ENCODE measurements at regions of chr6 and their contacts with region 1.

Region 1: GRCh38 chr6:4018172-4018905 is 60.6 kb downstream of the FAM217A start:
- DNase-seq: peak; percentile 94 to 96 (median 95)
- H3K4me3 ChIP-seq: peak overlapping the region; percentile 57 to 64
- H3K4me3 Mint-ChIP-seq: peak overlapping the region; percentile 89 to 99 (median 96)
- H3K27ac ChIP-seq: peak overlapping the region; percentile 91
- H3K27ac Mint-ChIP-seq: peak overlapping the region; percentile 90 to 98 (median 96)
- H3K4me1 ChIP-seq: peaks cover 71% of the 10 kb centered on the region
- H3K4me1 Mint-ChIP-seq: peaks cover 49 to 88% (median 66%) of the 10 kb centered on the region in 4 donors
- H3K27me3 ChIP-seq: no peaks in the 10 kb centered on the region
- H3K27me3 Mint-ChIP-seq: no peaks in the 10 kb centered on the region

Region 2: GRCh38 chr6:2765166-2765895 is 1253.0 kb before region 1 on chr6 and contains the start of gene WRNIP1:
- CTCF ChIA-PET with region 1: no interaction called
- POLR2A ChIA-PET with region 1: interaction called, 4 read pairs
- intact Hi-C with region 1: loop called (anchors 1 kb)
- DNase-seq: peak; percentile 95 to 98 (median 98)
- H3K4me3 ChIP-seq: peak within 1 kb of the TSS; percentile 63 to 79
- H3K4me3 Mint-ChIP-seq: peak within 1 kb of the TSS; percentile 93 to 97 (median 95)
- H3K27ac ChIP-seq: peak within 1 kb of the TSS; percentile 90
- H3K27ac Mint-ChIP-seq: peak within 1 kb of the TSS; percentile 98 to 100 (median 99)
- H3K4me1 ChIP-seq: peaks cover 45% of the 10 kb centered on the region
- H3K4me1 Mint-ChIP-seq: peaks cover 33 to 63% (median 43%) of the 10 kb centered on the region in 4 donors
- H3K27me3 ChIP-seq: no peaks in the 10 kb centered on the region
- H3K27me3 Mint-ChIP-seq: peaks cover 0 to 1% of the 10 kb centered on the region in 2 donors
- total RNA-seq, gene WRNIP1: 41.1 to 42.7 TPM

Region 3: DNA sequence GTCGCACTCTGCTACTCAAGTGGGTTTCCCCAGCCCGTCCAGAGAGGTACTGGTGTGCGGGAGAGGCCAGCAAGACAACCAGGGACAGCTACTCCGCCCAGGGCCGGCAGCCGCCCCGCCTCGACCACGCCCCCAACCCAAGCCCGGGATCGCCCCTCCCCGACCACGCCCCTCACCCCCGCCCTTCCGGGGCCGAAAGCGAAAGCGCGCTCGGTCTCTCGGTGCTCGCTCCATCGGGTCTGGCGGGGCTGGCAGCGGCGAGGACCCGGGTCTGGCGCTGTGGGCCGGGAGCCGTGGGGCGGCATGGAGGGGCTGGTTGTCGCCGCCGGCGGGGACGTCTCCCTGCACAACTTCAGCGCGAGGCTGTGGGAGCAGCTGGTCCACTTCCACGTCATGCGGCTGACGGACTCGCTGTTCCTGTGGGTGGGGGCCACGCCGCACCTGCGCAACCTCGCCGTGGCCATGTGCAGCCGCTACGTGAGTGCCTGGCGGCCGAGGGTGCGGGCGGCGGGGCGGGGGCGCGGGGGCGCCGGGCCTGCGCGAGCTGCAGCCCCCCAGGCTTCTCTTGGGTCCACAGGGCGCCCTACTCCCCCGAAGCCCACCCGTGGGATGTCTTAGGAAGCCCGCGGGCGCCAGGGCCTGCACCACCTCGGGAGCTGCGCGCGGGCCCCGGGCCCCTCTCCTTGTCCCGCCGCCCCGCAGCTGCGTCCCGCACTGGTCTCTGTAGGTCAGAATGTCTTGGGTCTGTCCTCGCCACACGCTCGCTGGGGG is 759.4 kb before region 1 on chr6 and contains the start of gene PSMG4:
- CTCF ChIA-PET with region 1: no interaction called
- POLR2A ChIA-PET with region 1: interaction called, 8 read pairs
- intact Hi-C with region 1: loop called (anchors 2 kb)
- DNase-seq: peak; percentile 87 to 92 (median 88)
- H3K4me3 ChIP-seq: peak within 1 kb of the TSS; percentile 44 to 67
- H3K4me3 Mint-ChIP-seq: peak within 1 kb of the TSS; percentile 93 to 99 (median 96)
- H3K27ac ChIP-seq: peak within 1 kb of the TSS; percentile 70
- H3K27ac Mint-ChIP-seq: peak within 1 kb of the TSS; percentile 92 to 99 (median 95)
- H3K4me1 ChIP-seq: peaks cover 45% of the 10 kb centered on the region
- H3K4me1 Mint-ChIP-seq: peaks cover 21 to 49% (median 37%) of the 10 kb centered on the region in 4 donors
- H3K27me3 ChIP-seq: no peaks in the 10 kb centered on the region
- H3K27me3 Mint-ChIP-seq: no peaks in the 10 kb centered on the region
- total RNA-seq, gene PSMG4: 41.0 to 41.6 TPM

Region 4: DNA sequence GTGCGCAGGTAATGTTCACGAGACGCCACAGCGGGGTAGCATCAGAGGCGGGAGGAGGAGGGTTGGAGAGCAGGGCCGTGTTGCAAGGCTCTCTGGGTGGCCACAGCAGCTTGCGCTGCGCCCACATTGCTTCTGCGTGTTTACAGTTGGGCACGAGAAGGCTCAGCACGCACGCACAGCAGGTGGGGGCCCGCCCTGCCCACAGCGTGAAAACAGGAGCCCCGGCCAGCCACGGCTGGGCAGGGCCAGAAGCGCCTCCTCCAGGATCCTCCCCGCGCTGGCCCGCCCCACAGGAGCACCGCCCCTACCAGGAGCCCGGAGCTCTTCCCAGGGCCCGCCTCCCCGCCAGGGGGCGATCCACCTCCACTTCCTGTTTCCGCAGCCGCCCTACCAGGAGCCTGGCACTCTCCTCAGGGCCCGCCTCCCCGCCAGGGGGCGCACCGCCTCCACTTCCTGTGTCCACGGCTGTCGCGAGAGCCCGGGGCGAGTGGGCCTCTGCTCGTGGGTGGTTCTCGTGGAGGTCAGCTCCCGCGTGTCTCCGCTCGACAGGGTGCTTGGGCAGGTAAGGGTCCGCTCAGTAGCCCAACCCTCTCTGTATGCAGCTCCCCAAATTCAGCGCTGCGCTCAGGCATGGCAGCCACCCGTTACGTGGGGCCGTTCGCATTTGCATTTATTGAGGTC is 169.3 kb before region 1 on chr6 and contains the start of gene FAM50B:
- CTCF ChIA-PET with region 1: interaction called, 24 read pairs
- POLR2A ChIA-PET with region 1: interaction called, 34 read pairs
- intact Hi-C with region 1: loop called (anchors 1 kb)
- DNase-seq: peak; percentile 90 to 92 (median 91)
- H3K4me3 ChIP-seq: peak within 1 kb of the TSS in 1 of 2 donors; percentile 63
- H3K4me3 Mint-ChIP-seq: peak within 1 kb of the TSS; percentile 79 to 87 (median 85)
- H3K27ac ChIP-seq: peak within 1 kb of the TSS; percentile 45
- H3K27ac Mint-ChIP-seq: peak within 1 kb of the TSS; percentile 66 to 96 (median 92)
- H3K4me1 ChIP-seq: peaks cover 34% of the 10 kb centered on the region
- H3K4me1 Mint-ChIP-seq: peaks cover 21 to 46% (median 29%) of the 10 kb centered on the region in 4 donors
- H3K27me3 ChIP-seq: no peaks in the 10 kb centered on the region
- H3K27me3 Mint-ChIP-seq: no peaks in the 10 kb centered on the region
- total RNA-seq, gene FAM50B: 15.0 to 15.4 TPM

Region 5: DNA sequence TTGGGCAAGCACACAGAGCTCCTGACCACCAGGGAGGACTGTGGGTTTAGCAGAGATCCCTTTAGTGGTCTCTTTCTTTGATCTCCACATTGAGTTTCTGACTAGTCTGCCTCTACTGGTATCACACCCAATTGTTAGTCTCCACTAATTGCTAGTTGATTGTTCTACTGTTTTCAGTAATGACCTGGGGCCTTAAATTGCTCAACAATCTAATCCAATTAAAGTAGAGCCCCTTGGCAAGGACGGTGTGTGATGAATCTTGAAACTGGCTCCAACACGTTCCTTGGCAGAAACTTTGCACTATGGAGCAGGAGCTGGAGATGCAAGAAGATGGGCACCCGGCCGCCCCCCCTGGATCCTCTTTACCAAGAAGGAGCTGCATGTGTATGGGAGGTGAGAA is 156.9 kb before region 1 on chr6:
- CTCF ChIA-PET with region 1: no interaction called
- POLR2A ChIA-PET with region 1: no interaction called
- intact Hi-C with region 1: no loop called
- DNase-seq: no peak
- H3K4me3 ChIP-seq: no peak overlapping the region
- H3K4me3 Mint-ChIP-seq: no peak overlapping the region
- H3K27ac ChIP-seq: no peak overlapping the region
- H3K27ac Mint-ChIP-seq: no peak overlapping the region
- H3K4me1 ChIP-seq: no peaks in the 10 kb centered on the region
- H3K4me1 Mint-ChIP-seq: peaks cover 0 to under 1% (median 0%) of the 10 kb centered on the region in 4 donors
- H3K27me3 ChIP-seq: no peaks in the 10 kb centered on the region
- H3K27me3 Mint-ChIP-seq: peaks cover 0 to 4% of the 10 kb centered on the region in 2 donors

Region 6: DNA sequence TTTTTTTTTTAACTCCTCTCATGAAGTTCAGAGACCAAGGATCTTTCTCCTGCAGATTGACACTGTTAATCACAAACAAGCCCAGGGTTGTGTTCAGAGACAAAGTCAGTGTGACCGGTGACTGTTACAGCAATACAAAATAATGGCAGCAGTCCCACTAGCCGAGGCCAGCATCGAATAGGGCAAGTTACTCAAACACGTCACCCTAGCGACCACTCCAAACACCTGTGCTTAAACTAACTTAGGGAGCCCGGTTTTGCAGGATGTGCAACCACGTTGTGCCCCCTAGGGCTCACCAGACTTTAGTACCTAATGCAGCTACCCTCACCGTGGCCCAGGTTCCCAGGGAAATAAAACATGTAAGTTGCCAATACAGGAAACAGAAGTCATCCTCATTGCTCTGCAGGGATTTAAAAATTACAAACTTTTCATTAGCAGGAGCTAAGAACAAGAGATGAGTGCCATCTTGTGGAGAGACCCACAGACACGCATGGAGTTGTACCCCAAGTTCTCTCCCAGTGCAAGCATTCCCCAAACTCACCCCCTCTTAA is 131.1 kb before region 1 on chr6:
- CTCF ChIA-PET with region 1: no interaction called
- POLR2A ChIA-PET with region 1: no interaction called
- intact Hi-C with region 1: no loop called
- DNase-seq: peak in 2 of 5 donors; percentile 4 to 18
- H3K4me3 ChIP-seq: no peak overlapping the region
- H3K4me3 Mint-ChIP-seq: no peak overlapping the region
- H3K27ac ChIP-seq: no peak overlapping the region
- H3K27ac Mint-ChIP-seq: no peak overlapping the region
- H3K4me1 ChIP-seq: no peaks in the 10 kb centered on the region
- H3K4me1 Mint-ChIP-seq: peaks cover 0 to 3% (median 0%) of the 10 kb centered on the region in 4 donors
- H3K27me3 ChIP-seq: no peaks in the 10 kb centered on the region
- H3K27me3 Mint-ChIP-seq: no peaks in the 10 kb centered on the region

Region 7: DNA sequence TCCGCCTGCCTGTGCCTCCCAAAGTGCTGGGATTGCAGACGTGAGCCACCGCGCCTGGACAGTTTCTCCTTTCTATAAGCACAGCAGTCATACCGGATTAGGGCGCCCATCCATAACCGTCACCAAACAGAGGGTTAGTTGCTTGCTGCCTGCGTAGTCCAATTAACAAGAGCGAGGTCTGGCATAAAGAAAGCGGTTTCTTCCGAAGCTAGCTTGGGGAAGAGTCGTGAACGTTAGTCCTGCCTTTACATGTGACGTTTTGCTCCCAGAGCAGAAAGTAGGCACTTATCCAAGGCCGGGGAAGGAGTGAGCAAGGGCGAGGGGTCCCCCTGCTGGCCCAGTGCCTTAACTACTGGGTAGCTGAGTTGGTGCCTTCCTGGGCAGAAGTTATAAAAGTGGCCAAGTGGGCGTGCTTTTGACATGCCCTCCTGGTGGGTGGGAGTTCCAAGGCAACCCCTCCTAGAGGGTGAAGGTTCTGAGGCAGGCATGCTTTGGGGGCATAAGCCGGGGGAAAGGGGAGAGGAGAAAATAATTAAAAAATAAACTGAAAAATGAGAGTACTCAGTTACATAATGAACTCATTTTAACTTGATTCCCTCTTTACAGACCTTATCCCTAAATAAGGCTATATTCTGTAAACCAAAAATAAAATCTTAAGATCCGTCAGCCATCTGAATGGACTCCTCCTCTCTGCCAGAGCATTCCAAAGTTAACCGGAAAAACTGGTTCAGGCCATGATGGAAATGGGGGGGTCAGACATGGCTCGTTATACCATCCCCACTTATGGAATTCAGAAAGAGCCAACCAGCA is 27.4 kb before region 1 on chr6:
- CTCF ChIA-PET with region 1: interaction called, 16 read pairs
- POLR2A ChIA-PET with region 1: interaction called, 9 read pairs
- intact Hi-C with region 1: no loop called
- DNase-seq: peak; percentile 52 to 68 (median 58)
- H3K4me3 ChIP-seq: no peak overlapping the region
- H3K4me3 Mint-ChIP-seq: no peak overlapping the region
- H3K27ac ChIP-seq: no peak overlapping the region
- H3K27ac Mint-ChIP-seq: peak overlapping the region in 4 of 7 donors; percentile 33 to 91 (median 56)
- H3K4me1 ChIP-seq: peaks cover 8% of the 10 kb centered on the region
- H3K4me1 Mint-ChIP-seq: peaks cover 9 to 23% (median 14%) of the 10 kb centered on the region in 4 donors
- H3K27me3 ChIP-seq: no peaks in the 10 kb centered on the region
- H3K27me3 Mint-ChIP-seq: no peaks in the 10 kb centered on the region

Region 8: GRCh38 chr6:4055420-4056041 is 37.2 kb after region 1 on chr6:
- CTCF ChIA-PET with region 1: interaction called, 19 read pairs
- POLR2A ChIA-PET with region 1: interaction called, 3 read pairs
- intact Hi-C with region 1: no loop called
- DNase-seq: peak in 1 of 5 donors; percentile 2
- H3K4me3 ChIP-seq: no peak overlapping the region
- H3K4me3 Mint-ChIP-seq: no peak overlapping the region
- H3K27ac ChIP-seq: no peak overlapping the region
- H3K27ac Mint-ChIP-seq: peak overlapping the region in 4 of 7 donors; percentile 34 to 70 (median 60)
- H3K4me1 ChIP-seq: no peaks in the 10 kb centered on the region
- H3K4me1 Mint-ChIP-seq: peaks cover 8 to 15% (median 11%) of the 10 kb centered on the region in 4 donors
- H3K27me3 ChIP-seq: no peaks in the 10 kb centered on the region
- H3K27me3 Mint-ChIP-seq: no peaks in the 10 kb centered on the region

Region 9: GRCh38 chr6:5003604-5004372 is 985.4 kb after region 1 on chr6 and contains the start of gene RPP40:
- CTCF ChIA-PET with region 1: interaction called, 3 read pairs
- POLR2A ChIA-PET with region 1: no interaction called
- intact Hi-C with region 1: loop called (anchors 5 kb)
- DNase-seq: peak; percentile 98 to 99 (median 99)
- H3K4me3 ChIP-seq: peak within 1 kb of the TSS; percentile 33 to 85
- H3K4me3 Mint-ChIP-seq: peak within 1 kb of the TSS; percentile 93 to 97 (median 94)
- H3K27ac ChIP-seq: peak within 1 kb of the TSS; percentile 68
- H3K27ac Mint-ChIP-seq: peak within 1 kb of the TSS; percentile 94 to 97 (median 95)
- H3K4me1 ChIP-seq: peaks cover 10% of the 10 kb centered on the region
- H3K4me1 Mint-ChIP-seq: peaks cover 3 to 17% (median 10%) of the 10 kb centered on the region in 4 donors
- H3K27me3 ChIP-seq: no peaks in the 10 kb centered on the region
- H3K27me3 Mint-ChIP-seq: no peaks in the 10 kb centered on the region
- total RNA-seq, gene RPP40: 5.5 to 6.3 TPM

Measured in CD4-positive, alpha-beta memory T cell (primary cell).